Vagina (tissue), 2 donors: ENCODE measurements at regions of chr18 and their contacts with region 1.

Region 1: DNA sequence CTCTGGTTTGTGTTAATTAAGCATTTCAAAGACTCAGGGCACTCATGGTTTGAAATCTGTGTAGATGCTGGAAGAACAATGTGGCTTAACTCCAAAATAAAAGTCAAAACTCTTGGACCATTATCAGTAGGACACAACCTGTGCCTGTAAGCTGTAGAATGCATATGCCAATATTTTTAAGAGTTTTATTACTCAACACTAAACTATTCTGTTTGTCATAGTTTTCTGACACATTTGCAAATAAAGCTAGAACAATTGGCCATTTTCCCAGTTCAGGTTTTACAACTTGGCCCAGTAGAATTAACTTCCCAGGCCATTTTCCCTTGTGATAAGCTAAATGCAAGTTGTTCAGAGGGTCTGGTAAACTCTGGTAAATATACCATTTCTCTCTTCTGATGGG is 713.1 kb downstream of the CBLN2 start:
- DNase-seq: no peak
- H3K4me3 ChIP-seq: no peak overlapping the region
- H3K27ac ChIP-seq: no peak overlapping the region
- H3K4me1 ChIP-seq: no peaks in the 10 kb centered on the region
- H3K27me3 ChIP-seq: no peaks in the 10 kb centered on the region
- CTCF ChIP-seq: no peak
- POLR2A ChIP-seq: no peak

Region 2: DNA sequence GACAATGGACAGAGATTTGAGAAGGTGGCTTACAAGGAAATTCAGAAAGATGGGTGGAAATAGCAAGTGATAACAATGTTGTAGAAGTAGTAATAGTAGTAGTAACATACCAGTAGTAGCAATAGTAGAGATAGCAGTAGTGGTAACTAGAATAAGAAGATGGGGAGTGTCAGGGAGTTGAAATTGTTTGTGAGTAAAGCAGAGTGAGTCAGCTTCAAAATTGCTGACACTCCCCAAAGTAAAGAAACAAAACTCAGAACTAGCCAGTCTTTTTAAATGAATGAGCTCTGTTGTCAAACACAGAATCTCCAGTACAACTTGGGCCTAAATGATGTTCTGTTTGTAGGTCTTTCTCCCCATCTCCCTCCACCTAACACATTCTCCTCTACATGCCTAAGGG is 327.8 kb before region 1 on chr18:
- intact Hi-C with region 1: no loop called
- DNase-seq: no peak
- H3K4me3 ChIP-seq: no peak overlapping the region
- H3K27ac ChIP-seq: no peak overlapping the region
- H3K4me1 ChIP-seq: no peaks in the 10 kb centered on the region
- H3K27me3 ChIP-seq: no peaks in the 10 kb centered on the region
- CTCF ChIP-seq: no peak
- POLR2A ChIP-seq: no peak

Region 3: DNA sequence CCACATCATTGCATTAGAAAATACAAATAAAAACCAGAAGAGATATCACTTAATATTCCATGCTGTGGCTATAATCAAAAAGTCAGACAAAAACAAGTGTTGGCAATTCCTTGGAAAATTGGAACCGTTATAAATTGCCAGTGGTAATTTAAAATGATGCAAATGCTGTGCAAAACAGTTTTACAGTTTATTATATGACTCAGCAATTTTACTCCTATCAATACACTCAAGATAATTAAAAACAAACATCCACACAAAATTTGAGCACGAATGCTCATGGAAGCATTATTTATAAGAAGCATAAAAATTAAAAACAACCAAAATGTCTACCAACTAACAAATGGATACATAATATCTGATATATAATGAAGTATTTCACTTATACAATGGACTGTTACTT is 15.7 kb before region 1 on chr18:
- intact Hi-C with region 1: loop called (anchors 1 kb)
- DNase-seq: no peak
- H3K4me3 ChIP-seq: no peak overlapping the region
- H3K27ac ChIP-seq: no peak overlapping the region
- H3K4me1 ChIP-seq: no peaks in the 10 kb centered on the region
- H3K27me3 ChIP-seq: no peaks in the 10 kb centered on the region
- CTCF ChIP-seq: no peak
- POLR2A ChIP-seq: no peak